WTC11 (cell line): ENCODE measurements at regions of chr11 and their contacts with region 1.

Region 1: GRCh38 chr11:67648140-67649123 is 2.1 kb downstream of the ACY3 start:
- DNase-seq: peak; percentile 71
- ATAC-seq: peak; percentile 89
- H3K4me3 Mint-ChIP-seq: no peak overlapping the region
- H3K27ac Mint-ChIP-seq: no peak overlapping the region
- H3K4me1 Mint-ChIP-seq: peaks cover 6% of the 10 kb centered on the region
- H3K27me3 Mint-ChIP-seq: no peaks in the 10 kb centered on the region; the same call in 1 of the 2 replicates
- CTCF ChIP-seq: no peak

Region 2: GRCh38 chr11:67563354-67564114 is 84.9 kb before region 1 on chr11:
- CTCF ChIA-PET with region 1: no interaction called
- POLR2A ChIA-PET with region 1: no interaction called
- DNase-seq: no peak
- ATAC-seq: no peak
- H3K4me3 Mint-ChIP-seq: no peak overlapping the region
- H3K27ac Mint-ChIP-seq: no peak overlapping the region
- H3K4me1 Mint-ChIP-seq: peaks cover 17% of the 10 kb centered on the region
- H3K27me3 Mint-ChIP-seq: peaks cover 5% of the 10 kb centered on the region
- CTCF ChIP-seq: no peak

Region 3: DNA sequence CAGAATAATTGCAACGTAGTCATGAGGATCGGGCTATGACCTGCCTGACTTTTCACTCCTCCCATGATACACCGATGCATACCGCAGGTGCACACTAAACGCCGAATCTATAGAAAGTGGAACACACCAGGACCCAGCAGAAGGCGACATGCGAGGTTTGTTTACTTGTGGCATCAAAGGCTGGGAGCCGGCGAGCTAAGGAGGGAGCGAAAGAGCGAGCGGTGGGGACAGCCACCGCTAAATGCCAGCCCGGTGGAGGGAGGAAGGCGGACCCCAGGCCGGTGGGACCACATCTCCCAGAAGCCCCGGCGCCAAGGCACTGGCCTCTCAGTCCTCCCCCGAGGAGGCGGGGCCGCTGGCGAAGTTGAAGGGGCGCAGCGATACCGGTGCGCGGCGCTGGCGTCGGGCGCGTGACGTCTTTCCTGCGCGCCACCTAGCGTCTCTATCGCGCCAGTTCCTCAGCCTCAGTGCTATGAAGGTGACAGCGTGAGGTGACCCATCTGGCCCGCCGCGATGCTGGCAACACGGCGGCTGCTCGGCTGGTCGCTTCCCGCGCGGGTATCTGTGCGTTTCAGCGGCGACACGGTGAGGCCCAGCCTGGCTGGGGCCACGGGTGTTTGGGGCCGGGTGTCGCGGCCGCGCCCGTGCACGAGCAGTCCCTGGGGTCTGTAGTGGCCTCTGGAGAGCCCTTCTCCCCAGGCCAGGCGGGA is 41.8 kb before region 1 on chr11 and contains the start of gene NDUFV1:
- CTCF ChIA-PET with region 1: no interaction called
- POLR2A ChIA-PET with region 1: no interaction called
- DNase-seq: peak; percentile 98
- ATAC-seq: peak; percentile 98
- H3K4me3 Mint-ChIP-seq: peak within 1 kb of the TSS; percentile 94
- H3K27ac Mint-ChIP-seq: no peak within 1 kb of the TSS
- H3K4me1 Mint-ChIP-seq: peaks cover 24% of the 10 kb centered on the region
- H3K27me3 Mint-ChIP-seq: peaks cover 11% of the 10 kb centered on the region
- CTCF ChIP-seq: no peak
- total RNA-seq, gene NDUFV1: 201 to 231 TPM (median 213 TPM) in 3 replicates

Region 4: GRCh38 chr11:67698247-67698646 is 49.8 kb after region 1 on chr11:
- CTCF ChIA-PET with region 1: interaction called, 14 read pairs
- POLR2A ChIA-PET with region 1: no interaction called
- DNase-seq: no peak
- ATAC-seq: peak; percentile 84
- H3K4me3 Mint-ChIP-seq: no peak overlapping the region
- H3K27ac Mint-ChIP-seq: no peak overlapping the region
- H3K4me1 Mint-ChIP-seq: peaks cover 9% of the 10 kb centered on the region
- H3K27me3 Mint-ChIP-seq: peaks cover 13% of the 10 kb centered on the region
- CTCF ChIP-seq: no peak